AG04450 (cell line): ENCODE measurements at regions of chr10 and their contacts with region 1.

Region 1: DNA sequence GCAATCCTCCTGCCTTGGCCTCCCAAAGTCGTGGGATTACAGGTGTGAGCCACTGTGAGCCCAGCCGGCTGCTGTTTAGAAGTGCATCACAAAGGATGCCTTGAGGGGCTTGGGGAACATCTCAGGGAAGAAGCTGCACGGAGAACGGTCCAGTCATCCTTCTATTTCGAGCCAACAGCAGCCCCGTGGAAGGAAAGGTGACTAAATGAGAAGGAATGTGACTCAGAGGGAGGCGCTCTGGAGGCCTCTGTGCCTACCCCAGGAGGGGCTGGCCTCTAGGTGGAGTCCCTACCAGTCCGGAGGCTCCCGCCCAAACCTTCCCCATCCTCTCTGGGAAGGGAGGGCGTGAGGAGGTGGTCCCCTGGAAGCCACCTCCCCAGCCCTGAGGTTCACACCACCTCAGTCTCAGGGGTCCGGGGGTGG is 76.2 kb downstream of the CTBP2 start:
- DNase-seq: peak; percentile 78
- H3K4me3 ChIP-seq: no peak overlapping the region
- H3K27ac ChIP-seq: peak overlapping the region; percentile 96
- H3K27me3 ChIP-seq: no peaks in the 10 kb centered on the region
- CTCF ChIP-seq: peak; percentile 26; the same call in 1 of the 2 replicates

Region 2: DNA sequence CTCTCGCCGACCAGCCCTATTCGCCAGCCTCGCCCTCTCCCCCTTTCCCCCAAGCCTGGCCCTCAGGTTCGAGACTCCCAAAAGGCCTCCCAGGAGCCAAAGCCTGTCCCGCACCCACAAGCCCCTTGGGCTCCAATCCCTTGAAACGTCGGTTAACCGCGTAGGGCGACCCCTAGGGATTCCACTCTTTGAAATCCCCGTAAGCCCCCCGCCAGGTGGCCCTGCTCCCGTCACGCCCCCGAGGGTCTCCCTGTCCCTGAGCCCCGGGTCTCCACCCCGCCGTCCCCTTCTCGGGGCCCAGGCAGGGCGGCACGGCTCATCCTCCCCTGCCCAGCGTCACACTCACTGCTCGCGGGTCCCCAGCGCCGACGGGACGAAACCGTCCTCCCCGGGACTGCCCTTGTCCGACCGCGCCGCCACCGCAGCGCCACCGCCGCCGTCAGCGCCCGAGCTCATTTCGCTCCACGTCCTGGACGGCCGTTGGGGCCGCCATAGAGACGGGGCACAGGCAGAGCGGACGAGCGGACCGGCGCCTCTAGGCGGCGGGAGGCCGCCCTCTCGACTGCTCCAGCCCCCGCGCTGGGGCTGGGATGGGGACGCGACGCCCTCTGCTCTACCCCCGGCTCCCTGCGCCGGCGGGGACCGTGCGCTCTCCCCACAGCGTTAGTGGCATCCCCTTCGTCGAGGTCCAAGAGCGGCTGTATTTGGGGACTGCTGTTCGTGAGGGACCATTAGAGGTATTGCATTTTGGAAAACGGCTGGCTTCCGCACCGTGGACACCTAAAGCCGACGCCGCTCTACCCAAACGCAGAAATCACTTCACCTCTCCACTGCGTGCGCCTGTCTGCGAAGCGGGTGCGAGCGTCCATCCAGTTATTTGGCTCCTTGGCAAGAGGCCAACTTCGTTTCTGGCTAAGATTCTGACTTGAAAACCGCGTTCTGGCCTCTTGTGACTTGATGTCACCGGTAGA is 292.5 kb before region 1 on chr10 and contains the start of gene EEF1AKMT2:
- CTCF ChIA-PET with region 1: no interaction called
- POLR2A ChIA-PET with region 1: no interaction called
- DNase-seq: peak; percentile 65
- H3K4me3 ChIP-seq: peak within 1 kb of the TSS; percentile 92
- H3K27ac ChIP-seq: peak within 1 kb of the TSS; percentile 73
- H3K27me3 ChIP-seq: no peaks in the 10 kb centered on the region
- CTCF ChIP-seq: peak; percentile 35; the same call in 1 of the 2 replicates
- polyA plus RNA-seq, gene EEF1AKMT2: 16.3 and 24.0 TPM in 2 replicates

Region 3: GRCh38 chr10:125038637-125039036 is 45.6 kb before region 1 on chr10:
- CTCF ChIA-PET with region 1: no interaction called
- POLR2A ChIA-PET with region 1: interaction called, 12 read pairs
- DNase-seq: no peak
- H3K4me3 ChIP-seq: no peak overlapping the region
- H3K27ac ChIP-seq: no peak overlapping the region
- H3K27me3 ChIP-seq: no peaks in the 10 kb centered on the region
- CTCF ChIP-seq: 0 out of 2 replicates have a peak, but pooled peaks have one; percentile 6

Region 4: GRCh38 chr10:125060826-125061556 is 23.2 kb before region 1 on chr10:
- CTCF ChIA-PET with region 1: interaction called, 26 read pairs
- POLR2A ChIA-PET with region 1: interaction called, 6 read pairs
- DNase-seq: peak; percentile 56
- H3K4me3 ChIP-seq: no peak overlapping the region
- H3K27ac ChIP-seq: peak overlapping the region; percentile 70
- H3K27me3 ChIP-seq: no peaks in the 10 kb centered on the region
- CTCF ChIP-seq: peak; percentile 81